ENCODE measurements at regions of chr5 and their contacts with region 1.

Region 1: DNA sequence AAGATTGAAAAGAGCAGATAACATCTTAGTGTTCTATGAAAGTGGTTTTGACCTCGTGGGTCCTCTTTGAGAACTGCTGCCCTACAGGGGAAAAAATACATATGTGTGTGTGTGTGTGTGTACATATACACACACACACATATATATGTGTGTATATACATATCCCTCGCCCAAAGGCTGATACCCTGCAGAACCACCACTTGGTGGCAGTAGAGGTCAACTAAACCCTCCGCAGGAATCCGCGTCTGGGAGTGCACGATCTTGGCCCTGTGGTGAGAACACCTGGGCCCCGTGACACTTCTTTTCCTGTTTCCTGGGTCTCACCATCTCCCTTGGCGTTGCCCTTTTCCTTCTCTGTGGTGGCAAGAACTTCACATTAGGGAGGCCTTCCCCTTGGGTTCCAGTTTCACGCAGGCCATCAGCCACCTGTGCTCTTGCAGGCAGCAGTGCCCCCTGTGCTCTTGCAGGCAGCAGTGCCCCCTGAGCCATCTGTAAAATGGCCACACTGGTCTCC is 8.2 kb downstream of the IL9 start:
- DNase-seq: peak; percentile 63 to 70 (median 68)
- H3K4me3 ChIP-seq: no peak overlapping the region
- H3K4me3 Mint-ChIP-seq: peak overlapping the region in 7 of 8 donors; percentile 40 to 75 (median 59)
- H3K27ac ChIP-seq: no peak overlapping the region
- H3K27ac Mint-ChIP-seq: peak overlapping the region in 1 of 7 donors; percentile 73
- H3K4me1 ChIP-seq: peaks cover 14% of the 10 kb centered on the region
- H3K4me1 Mint-ChIP-seq: peaks cover 7 to 29% (median 16%) of the 10 kb centered on the region in 4 donors
- H3K27me3 ChIP-seq: no peaks in the 10 kb centered on the region
- H3K27me3 Mint-ChIP-seq: peaks cover 6 to 19% of the 10 kb centered on the region in 2 donors

Region 2: GRCh38 chr5:136062366-136063274 is 175.2 kb after region 1 on chr5:
- CTCF ChIA-PET with region 1: interaction called, 13 read pairs
- POLR2A ChIA-PET with region 1: no interaction called
- intact Hi-C with region 1: loop called (anchors 1 kb)
- DNase-seq: peak in 4 of 5 donors; percentile 32 to 44 (median 38)
- H3K4me3 ChIP-seq: no peak overlapping the region
- H3K4me3 Mint-ChIP-seq: no peak overlapping the region
- H3K27ac ChIP-seq: no peak overlapping the region
- H3K27ac Mint-ChIP-seq: no peak overlapping the region
- H3K4me1 ChIP-seq: no peaks in the 10 kb centered on the region
- H3K4me1 Mint-ChIP-seq: peaks cover 0 to 4% (median under 1%) of the 10 kb centered on the region in 4 donors
- H3K27me3 ChIP-seq: no peaks in the 10 kb centered on the region
- H3K27me3 Mint-ChIP-seq: no peaks in the 10 kb centered on the region

Region 3: GRCh38 chr5:136174021-136174659 is 286.7 kb after region 1 on chr5:
- CTCF ChIA-PET with region 1: no interaction called
- POLR2A ChIA-PET with region 1: no interaction called
- intact Hi-C with region 1: loop called (anchors 1 kb)
- DNase-seq: peak in 2 of 5 donors; percentile 9 to 18
- H3K4me3 ChIP-seq: no peak overlapping the region
- H3K4me3 Mint-ChIP-seq: no peak overlapping the region
- H3K27ac ChIP-seq: no peak overlapping the region
- H3K27ac Mint-ChIP-seq: no peak overlapping the region
- H3K4me1 ChIP-seq: no peaks in the 10 kb centered on the region
- H3K4me1 Mint-ChIP-seq: no peaks in the 10 kb centered on the region
- H3K27me3 ChIP-seq: no peaks in the 10 kb centered on the region
- H3K27me3 Mint-ChIP-seq: no peaks in the 10 kb centered on the region

Region 4: DNA sequence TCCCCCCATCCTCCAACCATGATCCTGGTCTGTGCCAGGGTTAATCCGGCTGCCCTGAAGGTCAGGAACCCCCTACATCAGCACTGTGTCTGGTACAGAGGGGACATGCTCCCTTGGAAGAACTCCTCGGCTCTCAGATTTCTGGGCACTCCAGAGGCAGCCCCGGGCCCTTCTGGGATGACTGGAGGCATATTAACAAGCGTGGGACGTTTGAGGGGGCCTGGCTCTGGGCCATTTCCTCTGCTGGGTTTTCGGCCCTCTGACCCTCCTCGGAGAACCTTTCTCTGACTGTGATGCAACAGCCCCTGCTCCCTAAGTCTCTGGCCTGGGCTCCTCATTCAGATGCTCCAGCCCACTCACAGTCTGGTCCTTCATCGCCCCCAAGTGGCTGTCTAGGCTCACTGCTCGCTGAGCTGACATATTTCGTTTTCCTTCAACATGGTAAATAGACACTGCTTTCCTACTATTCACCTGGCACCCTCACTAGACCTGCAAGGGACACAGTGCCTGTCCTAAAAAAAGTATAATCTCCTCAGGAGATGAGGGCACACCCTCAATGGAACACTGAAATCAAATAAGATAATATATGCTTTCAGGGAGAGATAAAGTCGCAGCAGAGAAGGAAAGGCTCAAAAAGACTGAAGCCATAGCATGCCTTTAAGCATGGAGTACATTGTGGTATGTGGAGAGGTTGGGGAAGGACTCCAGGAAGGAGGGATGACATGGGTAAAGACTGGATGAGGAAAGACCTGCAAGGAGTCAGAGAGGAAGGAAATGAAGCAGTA is 882.7 kb after region 1 on chr5:
- CTCF ChIA-PET with region 1: no interaction called
- POLR2A ChIA-PET with region 1: no interaction called
- intact Hi-C with region 1: loop called (anchors 10 kb)
- DNase-seq: peak in 4 of 5 donors; percentile 5 to 15 (median 12)
- H3K4me3 ChIP-seq: no peak overlapping the region
- H3K4me3 Mint-ChIP-seq: no peak overlapping the region
- H3K27ac ChIP-seq: no peak overlapping the region
- H3K27ac Mint-ChIP-seq: no peak overlapping the region
- H3K4me1 ChIP-seq: no peaks in the 10 kb centered on the region
- H3K4me1 Mint-ChIP-seq: no peaks in the 10 kb centered on the region
- H3K27me3 ChIP-seq: no peaks in the 10 kb centered on the region
- H3K27me3 Mint-ChIP-seq: peaks cover 0 to 4% of the 10 kb centered on the region in 2 donors

Measured in CD4-positive, alpha-beta memory T cell (primary cell).